Motor neuron (in vitro differentiated cells): ENCODE measurements at regions of chrX and their contacts with region 1.

Region 1: GRCh38 chrX:46903458-46904242 is 8.6 kb upstream of the JADE3 start:
- ATAC-seq: peak; percentile 99 to 100 (median 99)
- H3K4me3 ChIP-seq: peak overlapping the region; percentile 34 to 59 (median 43)
- H3K27ac ChIP-seq: no peak overlapping the region
- H3K4me1 ChIP-seq: no peaks in the 10 kb centered on the region

Region 2: DNA sequence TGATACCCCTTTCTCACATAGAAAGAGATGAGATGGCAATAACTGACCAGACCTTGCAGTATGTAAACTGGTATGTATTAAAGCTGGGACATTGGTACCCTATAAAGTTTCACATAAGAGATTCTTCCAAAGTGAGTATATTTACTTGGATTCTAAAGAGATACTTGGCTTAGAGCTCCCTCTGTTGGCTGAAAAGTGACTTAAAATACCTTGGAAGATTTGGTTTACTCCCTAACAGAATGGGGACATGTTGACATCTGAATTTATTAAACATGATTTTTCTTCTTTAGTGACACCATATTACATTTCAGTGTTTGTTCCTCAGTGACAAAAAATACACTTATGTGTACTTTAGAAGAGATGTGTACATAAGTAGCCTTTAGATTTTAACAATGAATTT is 126.7 kb after region 1 on chrX:
- in situ Hi-C with region 1: loop called in 1 of 9 experiments (anchors 25 kb)
- ATAC-seq: peak in 3 of 8 experiments; percentile 18 to 30 (median 29)
- H3K4me3 ChIP-seq: no peak overlapping the region
- H3K27ac ChIP-seq: no peak overlapping the region
- H3K4me1 ChIP-seq: no peaks in the 10 kb centered on the region